Activated CD8-positive, alpha-beta T cell treated with anti-CD3 and anti-CD28 coated beads for 36 hours (primary cell): ENCODE measurements at regions of chr10 and their contacts with region 1.

Region 1: DNA sequence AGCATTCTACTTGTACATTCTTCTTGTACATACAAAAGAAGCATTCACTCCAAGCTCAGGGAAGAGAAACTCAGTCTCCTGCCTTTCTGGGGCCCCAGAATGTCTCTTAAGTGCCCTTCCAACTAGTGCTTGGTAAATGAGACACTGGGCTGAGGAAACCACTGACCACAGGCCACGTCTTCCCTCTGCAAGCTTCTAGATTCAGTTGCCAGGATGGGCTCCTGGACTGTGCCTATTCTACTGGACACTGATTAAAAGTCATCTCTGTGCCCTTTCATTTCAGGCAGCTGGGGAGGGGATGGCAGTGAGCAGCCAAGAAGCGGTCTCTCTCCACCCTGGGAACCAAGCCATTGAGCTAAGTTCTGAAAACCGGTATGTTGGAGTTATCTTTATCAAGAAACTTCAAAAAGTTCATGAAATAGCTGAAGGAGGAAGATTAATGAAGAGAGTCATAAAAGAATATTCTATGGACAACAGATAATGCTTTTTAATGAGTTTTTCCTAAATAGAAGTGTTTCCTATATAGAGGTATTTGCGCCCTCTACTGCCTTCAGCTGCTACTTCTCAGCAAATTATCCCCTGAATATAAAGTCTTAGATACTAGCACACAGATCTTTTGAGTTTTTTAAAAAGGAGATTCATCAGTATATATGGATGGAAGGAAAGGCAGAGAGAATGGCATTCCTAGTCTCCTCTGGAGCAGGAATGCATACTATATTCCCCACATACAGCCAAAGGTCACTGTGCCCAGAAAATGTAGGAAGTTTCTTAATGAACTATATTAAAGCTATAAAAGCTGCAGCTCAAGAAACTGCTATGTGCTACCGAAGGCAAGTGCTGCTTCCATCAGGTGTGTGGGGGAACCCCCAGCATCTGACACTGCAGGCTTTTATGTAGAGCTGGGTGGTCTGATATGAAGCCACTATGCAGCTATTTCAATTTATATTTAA is 8.4 kb upstream of the IFIT1B start:
- DNase-seq: peak; percentile 36
- ATAC-seq: no peak
- H3K4me3 Mint-ChIP-seq: no peak overlapping the region
- H3K27ac Mint-ChIP-seq: no peak overlapping the region
- H3K4me1 Mint-ChIP-seq: peaks cover 10% of the 10 kb centered on the region
- H3K27me3 Mint-ChIP-seq: peaks cover 9% of the 10 kb centered on the region
- CTCF ChIP-seq: peak; percentile 25

Region 2: GRCh38 chr10:89237849-89238248 is 131.6 kb before region 1 on chr10:
- CTCF ChIA-PET with region 1: no interaction called
- POLR2A ChIA-PET with region 1: no interaction called
- intact Hi-C with region 1: no loop called
- DNase-seq: no peak
- ATAC-seq: no peak
- H3K4me3 Mint-ChIP-seq: no peak overlapping the region
- H3K27ac Mint-ChIP-seq: no peak overlapping the region
- H3K4me1 Mint-ChIP-seq: no peaks in the 10 kb centered on the region
- H3K27me3 Mint-ChIP-seq: no peaks in the 10 kb centered on the region
- CTCF ChIP-seq: no peak

Region 3: DNA sequence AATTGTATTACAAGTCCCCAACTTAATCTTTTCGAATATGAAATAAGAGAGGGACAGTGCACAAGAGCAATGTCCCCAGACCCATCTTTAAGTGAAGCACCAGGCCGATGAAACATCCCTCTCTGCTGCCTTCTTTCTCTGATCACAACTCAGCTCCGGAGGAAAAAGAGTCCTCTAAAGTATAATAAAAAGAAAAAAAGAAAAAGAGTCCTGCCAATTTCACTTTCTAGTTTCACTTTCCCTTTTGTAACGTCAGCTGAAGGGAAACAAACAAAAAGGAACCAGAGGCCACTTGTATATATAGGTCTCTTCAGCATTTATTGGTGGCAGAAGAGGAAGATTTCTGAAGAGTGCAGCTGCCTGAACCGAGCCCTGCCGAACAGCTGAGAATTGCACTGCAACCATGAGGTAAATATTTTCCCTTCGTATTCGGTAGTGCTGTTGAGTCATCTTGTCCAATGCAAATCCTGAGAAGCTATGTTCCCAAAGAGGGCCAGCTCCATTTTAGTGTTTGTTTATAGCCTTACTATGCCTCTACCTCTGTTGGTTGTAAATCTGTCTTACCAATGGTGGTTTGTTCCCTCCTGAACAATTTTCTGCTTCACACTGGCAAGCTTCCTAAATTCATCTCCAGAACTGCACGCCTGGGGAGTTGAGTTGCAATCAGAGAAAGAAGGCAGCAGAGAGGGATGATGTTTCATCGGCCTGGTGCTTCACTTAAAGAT is 67.5 kb before region 1 on chr10 and contains the start of gene IFIT2:
- CTCF ChIA-PET with region 1: interaction called, 13 read pairs
- POLR2A ChIA-PET with region 1: interaction called, 5 read pairs
- intact Hi-C with region 1: no loop called
- DNase-seq: peak; percentile 21
- ATAC-seq: peak; percentile 70
- H3K4me3 Mint-ChIP-seq: peak within 1 kb of the TSS; percentile 84
- H3K27ac Mint-ChIP-seq: peak within 1 kb of the TSS; percentile 89
- H3K4me1 Mint-ChIP-seq: peaks cover 30% of the 10 kb centered on the region
- H3K27me3 Mint-ChIP-seq: peaks cover 1% of the 10 kb centered on the region
- CTCF ChIP-seq: no peak
- total RNA-seq, gene IFIT2: 39.2 to 41.6 TPM

Region 4: DNA sequence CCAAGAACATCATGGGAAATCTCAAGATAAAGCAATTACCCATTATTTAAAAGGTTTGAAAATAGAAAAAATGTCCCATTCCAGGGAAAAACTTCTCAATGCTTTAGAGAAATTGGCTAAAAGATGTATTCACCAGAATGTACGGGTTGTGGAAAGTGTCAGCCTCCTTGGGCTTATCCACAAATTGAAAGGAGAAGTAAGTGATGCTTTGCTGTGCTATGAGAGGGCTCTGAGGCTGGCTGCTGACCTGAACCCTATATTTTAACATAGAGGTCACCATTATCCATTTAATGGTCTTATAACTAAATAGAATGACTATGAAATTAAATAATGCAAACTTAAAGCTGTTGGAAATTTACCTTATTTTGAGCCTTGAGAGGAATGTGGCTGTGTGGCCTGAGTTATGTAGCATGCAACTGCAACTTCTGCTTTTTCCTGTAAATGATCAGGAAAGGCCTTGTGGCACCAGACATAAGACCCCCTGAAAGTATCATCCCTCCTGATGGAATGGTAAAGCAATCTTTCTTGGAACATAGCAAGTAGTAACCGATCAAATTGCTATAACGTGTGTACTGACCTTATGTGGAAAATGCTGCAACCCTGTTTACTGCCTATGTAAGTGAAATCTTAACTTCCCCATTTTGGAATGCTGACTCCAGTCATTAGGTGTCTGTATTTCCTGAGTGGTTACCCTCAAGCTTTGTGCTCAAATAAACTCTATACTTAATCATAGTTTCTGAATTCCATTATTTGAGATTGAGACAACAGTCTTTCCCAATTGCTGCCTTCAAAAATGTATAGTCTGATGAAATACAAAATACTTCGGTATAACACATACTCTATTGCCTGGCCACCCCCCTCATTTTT is 15.3 kb after region 1 on chr10:
- CTCF ChIA-PET with region 1: interaction called, 13 read pairs
- POLR2A ChIA-PET with region 1: no interaction called
- intact Hi-C with region 1: no loop called
- DNase-seq: no peak
- ATAC-seq: no peak
- H3K4me3 Mint-ChIP-seq: no peak overlapping the region
- H3K27ac Mint-ChIP-seq: no peak overlapping the region
- H3K4me1 Mint-ChIP-seq: peaks cover 8% of the 10 kb centered on the region
- H3K27me3 Mint-ChIP-seq: peaks cover 1% of the 10 kb centered on the region
- CTCF ChIP-seq: no peak

Region 5: GRCh38 chr10:89550509-89550908 is 181.1 kb after region 1 on chr10:
- CTCF ChIA-PET with region 1: no interaction called
- POLR2A ChIA-PET with region 1: no interaction called
- intact Hi-C with region 1: no loop called
- DNase-seq: no peak
- ATAC-seq: no peak
- H3K4me3 Mint-ChIP-seq: no peak overlapping the region
- H3K27ac Mint-ChIP-seq: no peak overlapping the region
- H3K4me1 Mint-ChIP-seq: no peaks in the 10 kb centered on the region
- H3K27me3 Mint-ChIP-seq: peaks cover 3% of the 10 kb centered on the region
- CTCF ChIP-seq: no peak